ENCODE measurements at regions of chr16 and their contacts with region 1.

Region 1: DNA sequence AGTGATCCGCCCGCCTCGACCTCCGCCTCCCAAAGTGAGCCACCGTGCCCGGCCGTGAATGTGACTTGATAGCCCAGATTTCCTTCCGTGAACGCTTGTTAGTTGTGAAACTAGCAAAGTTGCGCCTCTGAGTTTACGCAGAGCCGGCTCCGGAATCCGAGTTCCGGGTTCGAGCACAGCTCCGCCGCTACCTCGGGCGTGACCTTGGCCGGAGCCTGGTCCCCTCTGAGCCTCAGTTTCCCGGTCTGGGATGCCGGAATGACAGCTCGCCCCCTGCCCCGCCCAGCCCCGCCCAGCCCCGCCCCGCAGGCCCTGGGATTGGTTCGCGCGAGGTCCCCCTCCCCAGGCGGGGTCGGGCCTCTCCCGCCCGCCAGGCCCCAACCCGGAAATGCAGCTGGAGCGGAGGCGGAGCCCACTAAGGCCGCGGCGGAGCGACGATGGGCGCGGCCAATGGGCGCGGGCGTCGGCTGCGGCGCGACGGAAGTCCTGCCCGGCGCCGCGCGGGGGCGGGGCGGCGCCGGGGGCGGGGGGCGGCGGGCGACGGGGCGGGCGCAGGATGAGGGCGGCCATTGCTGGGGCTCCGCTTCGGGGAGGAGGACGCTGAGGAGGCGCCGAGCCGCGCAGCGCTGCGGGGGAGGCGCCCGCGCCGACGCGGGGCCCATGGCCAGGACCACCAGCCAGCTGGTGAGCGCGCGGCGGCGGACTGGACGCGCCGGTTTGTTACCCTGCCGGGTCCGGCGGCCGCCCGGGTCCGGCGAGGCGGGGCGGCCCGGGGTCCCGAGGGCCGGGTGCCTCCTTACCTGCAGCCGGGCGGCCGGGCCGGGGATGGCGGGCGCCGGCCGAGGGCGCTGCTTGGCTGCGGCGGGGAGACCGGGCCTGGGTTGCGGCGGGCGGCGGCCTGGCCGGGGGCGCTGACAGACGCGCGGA is at the start of gene PDPK1:
- DNase-seq: peak; percentile 93 to 97 (median 96)
- H3K4me3 ChIP-seq: peak within 1 kb of the TSS; percentile 63 to 65
- H3K4me3 Mint-ChIP-seq: peak within 1 kb of the TSS; percentile 78 to 92 (median 88)
- H3K27ac ChIP-seq: peak within 1 kb of the TSS; percentile 64
- H3K27ac Mint-ChIP-seq: peak within 1 kb of the TSS; percentile 74 to 96 (median 92)
- H3K4me1 ChIP-seq: peaks cover 37% of the 10 kb centered on the region
- H3K4me1 Mint-ChIP-seq: peaks cover 27 to 66% (median 46%) of the 10 kb centered on the region in 4 donors
- H3K27me3 ChIP-seq: no peaks in the 10 kb centered on the region
- H3K27me3 Mint-ChIP-seq: peaks cover 0 to 2% of the 10 kb centered on the region in 2 donors
- total RNA-seq, gene PDPK1: 61.2 to 71.3 TPM

Region 2: DNA sequence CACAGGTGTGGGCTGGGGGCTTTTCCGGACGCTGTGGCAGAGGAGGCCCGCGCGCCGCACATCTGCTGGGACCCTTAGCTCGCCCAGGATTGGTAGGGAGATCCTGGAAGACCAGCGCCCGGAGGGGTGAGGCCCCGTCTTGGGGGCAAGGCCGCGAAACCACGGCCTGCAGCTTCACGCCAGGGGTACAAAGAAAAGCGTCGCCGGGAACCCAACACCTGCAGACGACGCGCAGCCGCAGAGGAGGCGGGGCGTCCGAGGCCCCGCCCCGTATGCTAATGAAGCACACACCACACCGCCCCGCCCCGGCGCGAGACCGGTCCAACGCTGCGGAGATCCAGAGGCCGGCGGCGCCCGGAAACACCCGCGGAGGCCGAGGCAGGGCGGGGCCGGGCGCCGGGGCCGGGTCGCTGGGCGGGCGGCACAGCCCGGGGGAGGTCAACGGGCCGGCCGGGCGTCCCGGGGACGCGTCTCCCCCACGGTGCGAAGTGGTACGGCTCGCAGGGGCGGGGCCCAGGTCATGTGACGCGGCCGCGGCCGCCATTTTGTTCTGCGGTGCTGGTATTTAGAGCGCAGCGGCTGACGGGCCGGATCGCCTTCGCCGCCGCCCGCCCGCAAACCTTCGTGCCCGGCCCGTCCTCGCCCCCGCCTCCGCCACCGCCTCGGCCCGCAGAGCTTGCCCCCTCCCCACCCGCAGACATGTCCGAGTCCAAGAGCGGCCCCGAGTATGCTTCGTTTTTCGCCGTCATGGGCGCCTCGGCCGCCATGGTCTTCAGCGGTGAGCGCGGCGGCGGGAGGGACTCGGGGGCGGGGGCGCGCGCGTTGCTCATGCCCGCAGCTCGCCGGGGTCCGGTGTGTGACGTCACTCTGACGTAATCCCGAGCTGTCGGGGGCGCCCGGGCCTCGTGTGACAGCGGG is 24.1 kb before region 1 on chr16 and contains the start of gene ATP6V0C:
- CTCF ChIA-PET with region 1: no interaction called
- POLR2A ChIA-PET with region 1: interaction called, 170 read pairs
- intact Hi-C with region 1: loop called (anchors 1 kb)
- DNase-seq: peak; percentile 90 to 97 (median 94)
- H3K4me3 ChIP-seq: peak within 1 kb of the TSS; percentile 74 to 77
- H3K4me3 Mint-ChIP-seq: peak within 1 kb of the TSS; percentile 90 to 96 (median 92)
- H3K27ac ChIP-seq: peak within 1 kb of the TSS; percentile 94
- H3K27ac Mint-ChIP-seq: peak within 1 kb of the TSS; percentile 91 to 98 (median 97)
- H3K4me1 ChIP-seq: peaks cover 48% of the 10 kb centered on the region
- H3K4me1 Mint-ChIP-seq: peaks cover 32 to 64% (median 46%) of the 10 kb centered on the region in 4 donors
- H3K27me3 ChIP-seq: no peaks in the 10 kb centered on the region
- H3K27me3 Mint-ChIP-seq: no peaks in the 10 kb centered on the region
- total RNA-seq, gene ATP6V0C: 125 to 129 TPM

Region 3: GRCh38 chr16:2520092-2520783 is 17.5 kb before region 1 on chr16 and contains the start of gene AMDHD2:
- CTCF ChIA-PET with region 1: interaction called, 4 read pairs
- POLR2A ChIA-PET with region 1: interaction called, 170 read pairs
- intact Hi-C with region 1: loop called (anchors 1 kb)
- DNase-seq: peak; percentile 88 to 91 (median 89)
- H3K4me3 ChIP-seq: peak within 1 kb of the TSS; percentile 36 to 60
- H3K4me3 Mint-ChIP-seq: peak within 1 kb of the TSS; percentile 87 to 95 (median 93)
- H3K27ac ChIP-seq: peak within 1 kb of the TSS; percentile 84
- H3K27ac Mint-ChIP-seq: peak within 1 kb of the TSS; percentile 91 to 99 (median 97)
- H3K4me1 ChIP-seq: peaks cover 58% of the 10 kb centered on the region
- H3K4me1 Mint-ChIP-seq: peaks cover 42 to 69% (median 57%) of the 10 kb centered on the region in 4 donors
- H3K27me3 ChIP-seq: no peaks in the 10 kb centered on the region
- H3K27me3 Mint-ChIP-seq: peaks cover 0 to 1% of the 10 kb centered on the region in 2 donors
- total RNA-seq, gene AMDHD2: 114 to 121 TPM